Heart right ventricle (tissue), 16 donors: ENCODE measurements at regions of chr12 and their contacts with region 1.

Region 1: GRCh38 chr12:120610560-120610959 is 29.4 kb upstream of the POP5 start:
- DNase-seq: no peak
- ATAC-seq: no peak
- H3K4me3 ChIP-seq: no peak overlapping the region
- H3K27ac ChIP-seq: no peak overlapping the region
- H3K4me1 ChIP-seq: no peaks in the 10 kb centered on the region
- H3K27me3 ChIP-seq: peaks cover 0 to 4% (median 0%) of the 10 kb centered on the region in 7 donors
- CTCF ChIP-seq: no peak

Region 2: DNA sequence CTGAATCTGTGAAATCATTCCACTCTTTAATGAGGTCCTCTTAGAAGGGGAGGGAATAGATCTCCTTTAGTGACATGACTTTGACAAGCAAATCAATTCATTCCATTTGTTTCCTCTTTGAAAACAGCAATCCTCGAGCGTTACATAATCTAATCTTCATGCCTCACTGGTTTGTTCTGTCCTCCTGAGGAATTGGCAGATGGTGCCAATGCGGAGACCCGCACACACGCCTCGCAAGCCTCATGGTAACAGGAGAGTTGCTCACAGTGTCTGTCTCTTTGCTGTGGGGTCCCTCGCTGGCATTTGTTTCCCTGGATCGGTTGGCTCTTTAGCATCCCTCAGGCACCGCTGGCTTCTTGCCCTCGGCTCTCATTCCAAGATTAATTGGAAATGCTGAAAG is 19.5 kb after region 1 on chr12:
- intact Hi-C with region 1: loop called in 1 of 10 experiments (anchors 2 kb)
- DNase-seq: no peak
- ATAC-seq: no peak
- H3K4me3 ChIP-seq: no peak overlapping the region
- H3K27ac ChIP-seq: no peak overlapping the region
- H3K4me1 ChIP-seq: no peaks in the 10 kb centered on the region
- H3K27me3 ChIP-seq: peaks cover 0 to 11% (median 0%) of the 10 kb centered on the region in 7 donors
- CTCF ChIP-seq: no peak

Region 3: DNA sequence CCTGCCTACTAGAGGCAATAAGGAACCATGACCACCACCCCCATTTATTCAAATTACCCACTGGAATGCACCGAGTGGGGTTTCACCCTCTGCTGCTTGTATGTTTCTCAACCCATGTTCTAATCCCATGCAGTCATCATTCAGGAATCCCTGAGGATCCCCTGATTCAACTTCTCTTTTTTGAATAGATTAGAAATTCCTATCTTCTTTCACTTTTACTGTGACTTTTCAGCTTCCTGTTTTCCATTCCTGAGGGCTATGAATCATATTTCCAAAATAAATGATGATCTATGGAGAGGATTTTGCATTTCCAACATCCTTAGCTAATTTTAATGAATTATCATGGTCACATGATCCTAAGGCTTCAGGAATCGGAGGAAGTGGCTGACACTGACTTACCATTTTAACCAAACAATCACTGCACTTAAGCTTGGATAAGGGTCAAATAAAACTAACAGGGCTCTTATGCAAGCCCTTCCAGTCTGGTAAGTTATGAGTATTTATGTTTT is 580.0 kb after region 1 on chr12:
- intact Hi-C with region 1: no loop called
- DNase-seq: no peak
- ATAC-seq: peak in 6 of 8 donors; percentile 37 to 80 (median 46)
- H3K4me3 ChIP-seq: no peak overlapping the region
- H3K27ac ChIP-seq: peak overlapping the region in 4 of 10 donors; percentile 37 to 75 (median 46)
- H3K4me1 ChIP-seq: peaks cover 0 to 28% (median 0%) of the 10 kb centered on the region in 9 donors
- H3K27me3 ChIP-seq: no peaks in the 10 kb centered on the region
- CTCF ChIP-seq: no peak